Transverse colon (tissue), 4 donors: ENCODE measurements at regions of chr2 and their contacts with region 1.

Region 1: GRCh38 chr2:172220121-172220520 is 117.4 kb upstream of the DLX2 start:
- DNase-seq: no peak
- H3K4me3 ChIP-seq: no peak overlapping the region
- H3K27ac ChIP-seq: no peak overlapping the region
- H3K4me1 ChIP-seq: peaks cover 0 to 23% (median 13%) of the 10 kb centered on the region in 4 donors
- H3K27me3 ChIP-seq: no peaks in the 10 kb centered on the region
- CTCF ChIP-seq: no peak
- EP300 ChIP-seq: no peak
- POLR2A ChIP-seq: no peak

Region 2: GRCh38 chr2:171741189-171741588 is 478.9 kb before region 1 on chr2:
- in situ Hi-C with region 1: no loop called
- intact Hi-C with region 1: no loop called
- DNase-seq: no peak
- H3K4me3 ChIP-seq: no peak overlapping the region
- H3K27ac ChIP-seq: no peak overlapping the region
- H3K4me1 ChIP-seq: no peaks in the 10 kb centered on the region
- H3K27me3 ChIP-seq: no peaks in the 10 kb centered on the region
- CTCF ChIP-seq: no peak
- EP300 ChIP-seq: no peak
- POLR2A ChIP-seq: no peak

Region 3: DNA sequence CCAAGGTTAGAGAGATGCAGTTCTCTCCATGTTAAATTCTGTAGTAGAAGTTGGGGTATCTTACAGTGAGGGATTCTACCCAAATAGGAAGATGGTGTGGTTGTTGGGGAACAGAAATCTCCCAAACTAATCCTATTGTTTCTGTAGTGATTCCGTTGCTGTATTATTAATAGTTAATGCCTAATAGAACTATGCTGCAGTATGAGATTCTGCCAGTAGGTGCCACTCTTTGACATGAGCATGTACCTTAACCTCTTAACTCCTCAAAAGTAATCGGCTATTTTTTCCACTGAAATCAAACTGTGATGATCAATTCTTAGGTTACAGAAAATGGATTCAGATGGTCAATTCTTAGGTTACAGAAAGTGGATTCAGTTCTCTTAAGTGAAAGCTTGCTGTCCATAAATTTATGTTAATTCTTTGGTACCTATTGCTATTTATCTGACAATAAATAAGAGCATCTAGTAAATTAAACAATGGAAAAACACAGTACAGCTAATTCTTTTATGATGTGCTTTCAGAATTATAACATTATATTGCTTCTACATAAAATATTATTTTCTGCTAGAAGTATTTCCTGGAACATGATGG is 19.5 kb before region 1 on chr2:
- in situ Hi-C with region 1: no loop called
- intact Hi-C with region 1: loop called (anchors 2 kb)
- DNase-seq: no peak
- H3K4me3 ChIP-seq: no peak overlapping the region
- H3K27ac ChIP-seq: no peak overlapping the region
- H3K4me1 ChIP-seq: peaks cover 0 to 11% (median 0%) of the 10 kb centered on the region in 4 donors
- H3K27me3 ChIP-seq: no peaks in the 10 kb centered on the region
- CTCF ChIP-seq: peak; percentile 28 to 50 (median 43)
- EP300 ChIP-seq: no peak
- POLR2A ChIP-seq: no peak